Spleen (tissue), 13 donors: ENCODE measurements at regions of chr11 and their contacts with region 1.

Region 1: GRCh38 chr11:110337570-110338193 is 41.3 kb upstream of the RDX start:
- DNase-seq: no peak
- H3K4me3 ChIP-seq: no peak overlapping the region
- H3K27ac ChIP-seq: no peak overlapping the region
- H3K4me1 ChIP-seq: no peaks in the 10 kb centered on the region
- H3K27me3 ChIP-seq: no peaks in the 10 kb centered on the region
- CTCF ChIP-seq: no peak
- POLR2A ChIP-seq: no peak

Region 2: DNA sequence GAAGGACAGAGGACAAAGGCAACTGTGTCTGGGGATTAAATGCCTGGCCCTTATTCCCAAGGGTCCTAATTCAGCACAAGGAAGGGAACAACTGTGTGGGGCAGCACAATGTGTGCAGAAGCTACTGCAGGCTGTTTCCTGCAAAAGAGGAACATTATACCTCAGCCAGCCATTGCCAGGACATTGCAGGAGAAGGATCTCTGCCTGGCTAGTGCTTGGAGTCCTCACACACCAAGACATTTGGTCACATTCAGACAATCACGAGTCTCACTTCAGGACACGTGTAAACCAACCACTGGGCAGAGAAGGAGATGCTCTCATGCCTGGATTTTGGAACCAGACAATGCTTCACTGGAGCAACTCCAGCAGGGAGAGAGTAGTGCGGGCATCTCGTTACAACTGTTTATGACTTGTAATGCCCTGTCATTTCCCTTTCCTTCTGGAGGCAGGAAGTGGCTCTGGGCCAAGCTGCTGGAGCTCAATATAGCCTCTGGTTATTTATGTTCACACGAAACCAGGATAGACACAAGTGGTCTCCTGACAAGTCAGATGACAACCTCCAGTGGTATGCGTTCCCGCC is 268.4 kb before region 1 on chr11:
- intact Hi-C with region 1: no loop called
- DNase-seq: no peak
- H3K4me3 ChIP-seq: no peak overlapping the region
- H3K27ac ChIP-seq: peak overlapping the region in 6 of 8 donors; percentile 44 to 73 (median 62)
- H3K4me1 ChIP-seq: peaks cover 0 to 18% (median 12%) of the 10 kb centered on the region in 6 donors
- H3K27me3 ChIP-seq: peaks cover 0 to 5% (median 0%) of the 10 kb centered on the region in 7 donors
- CTCF ChIP-seq: no peak
- POLR2A ChIP-seq: no peak

Region 3: DNA sequence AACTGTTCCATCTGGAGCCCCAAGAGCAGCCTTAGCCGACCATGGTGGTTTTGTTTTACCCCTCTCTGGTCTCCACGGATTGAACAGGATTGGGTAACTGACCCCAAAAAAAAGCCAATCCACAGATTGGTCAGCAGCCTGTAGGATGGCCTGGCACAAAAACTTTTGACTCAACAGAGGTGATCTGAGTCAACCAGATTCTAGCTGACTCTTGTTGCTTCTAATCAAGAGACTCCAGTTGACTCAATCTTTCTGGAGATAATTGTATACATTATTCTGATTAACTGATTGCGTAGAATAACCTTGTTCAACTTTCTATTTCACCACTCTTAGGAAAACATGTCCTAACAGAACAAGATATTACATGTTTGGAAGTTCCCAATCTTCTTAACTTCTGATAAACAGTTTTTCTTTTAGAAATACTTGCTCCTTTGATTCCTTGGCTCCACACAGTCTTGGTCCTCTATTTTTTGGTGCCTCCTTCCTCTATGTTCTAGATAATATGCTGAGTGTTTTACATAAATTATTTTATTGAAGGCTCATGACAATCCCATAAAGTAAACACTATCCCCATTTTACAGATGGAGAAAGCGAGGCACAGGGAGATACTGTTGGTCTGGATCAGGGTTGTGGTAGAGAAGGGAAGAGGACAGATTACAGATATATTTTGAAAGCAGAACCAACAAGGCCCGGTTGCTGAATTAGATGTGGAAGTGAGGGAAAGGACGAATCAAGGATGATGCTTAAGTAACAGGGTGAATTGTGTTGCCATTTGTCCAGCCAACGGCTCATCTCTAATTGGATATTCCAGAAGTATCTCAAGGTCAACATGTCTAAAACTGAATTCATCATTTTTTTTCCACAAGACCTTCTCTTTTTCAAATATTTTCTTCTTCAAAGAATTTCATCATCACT is 256.0 kb before region 1 on chr11:
- intact Hi-C with region 1: no loop called
- DNase-seq: no peak
- H3K4me3 ChIP-seq: no peak overlapping the region
- H3K27ac ChIP-seq: no peak overlapping the region
- H3K4me1 ChIP-seq: peaks cover 0 to 11% (median 0%) of the 10 kb centered on the region in 6 donors
- H3K27me3 ChIP-seq: peaks cover 0 to 6% (median 0%) of the 10 kb centered on the region in 7 donors
- CTCF ChIP-seq: no peak
- POLR2A ChIP-seq: no peak

Region 4: DNA sequence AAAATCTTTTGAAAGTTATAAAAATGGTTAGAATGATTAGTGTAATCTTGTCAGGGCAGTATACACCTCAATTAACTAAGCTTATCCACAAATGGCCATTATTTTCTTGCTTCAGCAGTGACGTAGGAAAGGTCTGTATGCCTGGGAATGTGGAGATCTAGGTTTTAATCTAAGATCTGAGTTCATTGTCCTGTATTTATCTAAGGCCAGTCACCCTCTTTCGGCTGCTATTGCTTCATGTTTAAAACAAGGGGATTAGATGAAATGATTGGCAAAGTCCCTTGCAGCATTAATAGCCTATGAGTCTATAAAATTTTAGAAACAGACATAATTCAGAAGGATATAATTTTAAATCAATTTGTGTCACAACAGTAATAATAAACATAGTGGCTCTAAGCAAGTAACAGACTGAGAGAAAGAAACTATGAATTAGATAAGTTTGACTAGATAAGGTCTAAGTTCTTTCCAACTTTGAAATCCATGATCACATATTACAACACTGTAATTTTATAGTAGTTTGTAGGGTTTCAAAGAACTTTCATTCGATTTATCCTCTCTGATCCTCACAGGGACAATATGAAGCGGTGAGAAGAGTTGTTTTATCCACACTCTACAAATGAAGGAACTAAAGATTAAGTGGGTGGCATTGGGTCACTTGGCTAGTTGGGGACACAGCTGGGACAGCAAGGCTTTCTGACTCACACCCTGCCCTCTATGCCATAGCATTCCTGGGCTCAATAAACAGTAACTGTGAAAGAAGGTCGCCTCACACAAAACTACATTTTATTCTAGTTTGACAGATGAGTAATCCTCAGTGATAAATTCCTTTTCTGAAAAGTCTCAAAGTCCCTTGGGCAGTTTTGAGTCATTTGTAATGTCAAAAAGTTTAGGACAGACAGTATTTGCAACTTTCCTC is 19.3 kb after region 1 on chr11:
- intact Hi-C with region 1: loop called (anchors 2 kb)
- DNase-seq: no peak
- H3K4me3 ChIP-seq: no peak overlapping the region
- H3K27ac ChIP-seq: no peak overlapping the region
- H3K4me1 ChIP-seq: no peaks in the 10 kb centered on the region
- H3K27me3 ChIP-seq: no peaks in the 10 kb centered on the region
- CTCF ChIP-seq: no peak
- POLR2A ChIP-seq: no peak